B cell (primary cell): ENCODE measurements at regions of chr6 and their contacts with region 1.

Region 1: GRCh38 chr6:26553635-26554446 is 15.7 kb downstream of the HMGN4 start:
- DNase-seq: peak; percentile 92
- ATAC-seq: peak; percentile 42
- H3K4me3 ChIP-seq: peak overlapping the region; percentile 59 to 90 (median 74)
- H3K4me3 Mint-ChIP-seq: no peak overlapping the region
- H3K27ac ChIP-seq: peak overlapping the region; percentile 26 to 62
- H3K27ac Mint-ChIP-seq: no peak overlapping the region
- H3K4me1 ChIP-seq: peaks cover 15 to 45% of the 10 kb centered on the region in 2 donors
- H3K4me1 Mint-ChIP-seq: peaks cover 22% of the 10 kb centered on the region
- H3K27me3 ChIP-seq: no peaks in the 10 kb centered on the region
- H3K27me3 Mint-ChIP-seq: no peaks in the 10 kb centered on the region
- CTCF ChIP-seq: no peak

Region 2: GRCh38 chr6:26175428-26176181 is 378.2 kb before region 1 on chr6:
- CTCF ChIA-PET with region 1: interaction called, 6 read pairs
- POLR2A ChIA-PET with region 1: no interaction called
- intact Hi-C with region 1: loop called (anchors 5 kb)
- DNase-seq: peak; percentile 81
- ATAC-seq: no peak
- H3K4me3 ChIP-seq: no peak overlapping the region
- H3K4me3 Mint-ChIP-seq: peak overlapping the region; percentile 21
- H3K27ac ChIP-seq: no peak overlapping the region
- H3K27ac Mint-ChIP-seq: peak overlapping the region; percentile 85
- H3K4me1 ChIP-seq: peaks cover 21 to 26% of the 10 kb centered on the region in 2 donors
- H3K4me1 Mint-ChIP-seq: peaks cover 29% of the 10 kb centered on the region
- H3K27me3 ChIP-seq: no peaks in the 10 kb centered on the region
- H3K27me3 Mint-ChIP-seq: no peaks in the 10 kb centered on the region
- CTCF ChIP-seq: peak; percentile 93

Region 3: DNA sequence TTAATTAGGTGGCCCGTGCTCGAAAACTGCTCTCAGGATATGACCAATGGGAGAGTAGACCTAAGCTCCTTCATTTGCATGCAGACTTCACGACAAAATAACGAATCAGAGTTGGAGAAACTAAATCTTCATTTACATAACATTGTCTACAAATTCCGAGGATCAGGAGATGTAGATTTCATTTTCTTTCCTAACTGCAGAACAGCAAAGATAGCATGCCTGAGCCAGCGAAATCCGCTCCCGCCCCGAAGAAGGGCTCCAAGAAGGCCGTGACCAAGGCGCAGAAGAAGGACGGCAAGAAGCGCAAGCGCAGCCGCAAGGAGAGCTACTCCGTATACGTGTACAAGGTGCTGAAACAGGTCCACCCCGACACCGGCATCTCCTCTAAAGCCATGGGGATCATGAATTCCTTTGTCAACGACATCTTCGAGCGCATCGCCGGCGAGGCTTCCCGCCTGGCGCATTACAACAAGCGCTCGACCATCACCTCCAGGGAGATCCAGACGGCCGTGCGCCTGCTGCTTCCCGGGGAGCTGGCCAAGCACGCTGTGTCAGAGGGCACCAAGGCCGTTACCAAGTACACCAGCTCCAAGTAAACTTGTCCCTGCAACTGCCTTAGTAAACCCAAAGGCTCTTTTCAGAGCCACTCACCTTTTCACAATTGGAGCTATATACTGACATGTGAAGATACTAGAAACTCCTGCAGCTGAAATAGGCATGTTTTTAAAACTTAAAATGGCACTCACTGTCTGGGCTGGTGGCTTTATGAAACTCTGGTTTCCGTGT is 370.1 kb before region 1 on chr6:
- CTCF ChIA-PET with region 1: no interaction called
- POLR2A ChIA-PET with region 1: interaction called, 10 read pairs
- intact Hi-C with region 1: no loop called
- DNase-seq: peak; percentile 84
- ATAC-seq: peak; percentile 89
- H3K4me3 ChIP-seq: peak overlapping the region; percentile 51 to 73 (median 71)
- H3K4me3 Mint-ChIP-seq: peak overlapping the region; percentile 91
- H3K27ac ChIP-seq: peak overlapping the region in 1 of 2 donors; percentile 61
- H3K27ac Mint-ChIP-seq: peak overlapping the region; percentile 85
- H3K4me1 ChIP-seq: peaks cover 13 to 22% of the 10 kb centered on the region in 2 donors
- H3K4me1 Mint-ChIP-seq: peaks cover 25% of the 10 kb centered on the region
- H3K27me3 ChIP-seq: no peaks in the 10 kb centered on the region
- H3K27me3 Mint-ChIP-seq: no peaks in the 10 kb centered on the region
- CTCF ChIP-seq: no peak

Region 4: GRCh38 chr6:26312501-26313390 is 241.1 kb before region 1 on chr6:
- CTCF ChIA-PET with region 1: no interaction called
- POLR2A ChIA-PET with region 1: no interaction called
- intact Hi-C with region 1: loop called (anchors 2 kb)
- DNase-seq: peak; percentile 90
- ATAC-seq: peak; percentile 75
- H3K4me3 ChIP-seq: peak overlapping the region; percentile 64 to 100 (median 77)
- H3K4me3 Mint-ChIP-seq: peak overlapping the region; percentile 93
- H3K27ac ChIP-seq: peak overlapping the region in 1 of 2 donors; percentile 56
- H3K27ac Mint-ChIP-seq: peak overlapping the region; percentile 92
- H3K4me1 ChIP-seq: peaks cover 15 to 23% of the 10 kb centered on the region in 2 donors
- H3K4me1 Mint-ChIP-seq: peaks cover 32% of the 10 kb centered on the region
- H3K27me3 ChIP-seq: no peaks in the 10 kb centered on the region
- H3K27me3 Mint-ChIP-seq: peaks cover 4% of the 10 kb centered on the region
- CTCF ChIP-seq: no peak

Region 5: GRCh38 chr6:26383624-26384417 is 170.0 kb before region 1 on chr6:
- CTCF ChIA-PET with region 1: no interaction called
- POLR2A ChIA-PET with region 1: no interaction called
- intact Hi-C with region 1: no loop called
- DNase-seq: peak; percentile 54
- ATAC-seq: no peak
- H3K4me3 ChIP-seq: peak overlapping the region; percentile 70 to 97 (median 89)
- H3K4me3 Mint-ChIP-seq: peak overlapping the region; percentile 97
- H3K27ac ChIP-seq: peak overlapping the region; percentile 90 to 98
- H3K27ac Mint-ChIP-seq: peak overlapping the region; percentile 96
- H3K4me1 ChIP-seq: peaks cover 35 to 49% of the 10 kb centered on the region in 2 donors
- H3K4me1 Mint-ChIP-seq: peaks cover 66% of the 10 kb centered on the region
- H3K27me3 ChIP-seq: no peaks in the 10 kb centered on the region
- H3K27me3 Mint-ChIP-seq: no peaks in the 10 kb centered on the region
- CTCF ChIP-seq: no peak

Region 6: GRCh38 chr6:26520853-26521599 is 32.8 kb before region 1 on chr6:
- CTCF ChIA-PET with region 1: interaction called, 3 read pairs
- POLR2A ChIA-PET with region 1: interaction called, 4 read pairs
- intact Hi-C with region 1: loop called (anchors 1 kb)
- DNase-seq: peak; percentile 94
- ATAC-seq: peak; percentile 64
- H3K4me3 ChIP-seq: peak overlapping the region; percentile 60 to 95 (median 74)
- H3K4me3 Mint-ChIP-seq: peak overlapping the region; percentile 84
- H3K27ac ChIP-seq: peak overlapping the region; percentile 85 to 94
- H3K27ac Mint-ChIP-seq: peak overlapping the region; percentile 91
- H3K4me1 ChIP-seq: peaks cover 17 to 20% of the 10 kb centered on the region in 2 donors
- H3K4me1 Mint-ChIP-seq: peaks cover 33% of the 10 kb centered on the region
- H3K27me3 ChIP-seq: no peaks in the 10 kb centered on the region
- H3K27me3 Mint-ChIP-seq: no peaks in the 10 kb centered on the region
- CTCF ChIP-seq: no peak

Region 7: DNA sequence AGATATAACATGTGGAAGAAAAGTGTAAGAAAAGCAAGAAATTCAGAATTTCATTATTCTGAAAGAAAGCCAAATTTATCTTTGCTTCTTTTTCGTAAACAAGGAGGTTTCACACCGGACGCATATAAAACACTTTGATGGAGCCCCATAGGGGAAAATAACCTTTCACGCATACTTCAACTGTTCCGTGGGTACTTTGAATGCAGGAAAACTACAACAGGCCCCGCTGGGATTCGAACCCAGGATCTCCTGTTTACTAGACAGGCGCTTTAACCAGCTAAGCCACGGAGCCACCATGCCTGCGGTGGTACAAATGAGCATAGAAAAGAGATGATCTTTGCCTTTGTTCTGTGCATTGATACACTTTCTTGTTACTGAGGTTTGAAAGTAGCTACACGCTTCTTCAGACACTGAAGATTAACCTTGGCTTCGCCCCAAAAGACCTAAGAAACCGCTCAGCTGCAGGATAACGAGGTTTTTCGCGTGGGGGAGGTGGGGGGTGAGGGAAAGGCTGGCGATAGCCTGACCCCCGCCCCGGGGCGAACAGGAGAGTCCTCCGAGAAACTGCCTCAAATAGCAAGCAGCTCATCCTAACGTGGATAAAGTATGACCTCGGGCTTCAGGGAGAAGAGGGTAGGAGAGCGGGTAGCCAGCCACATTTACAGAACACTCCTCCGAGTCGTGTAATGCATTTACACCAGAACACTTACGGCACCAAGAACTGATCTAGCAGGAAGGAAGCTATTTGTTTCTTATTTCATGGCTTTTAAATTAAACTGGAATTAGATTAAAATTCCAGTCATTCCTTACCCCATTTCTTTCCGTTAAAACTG is 20.9 kb before region 1 on chr6:
- CTCF ChIA-PET with region 1: interaction called, 17 read pairs
- POLR2A ChIA-PET with region 1: interaction called, 10 read pairs
- intact Hi-C with region 1: loop called (anchors 1 kb)
- DNase-seq: peak; percentile 95
- ATAC-seq: peak; percentile 26
- H3K4me3 ChIP-seq: peak overlapping the region; percentile 56 to 86 (median 78)
- H3K4me3 Mint-ChIP-seq: peak overlapping the region; percentile 99
- H3K27ac ChIP-seq: peak overlapping the region; percentile 45 to 78
- H3K27ac Mint-ChIP-seq: peak overlapping the region; percentile 97
- H3K4me1 ChIP-seq: peaks cover 23 to 27% of the 10 kb centered on the region in 2 donors
- H3K4me1 Mint-ChIP-seq: peaks cover 48% of the 10 kb centered on the region
- H3K27me3 ChIP-seq: no peaks in the 10 kb centered on the region
- H3K27me3 Mint-ChIP-seq: peaks cover 3% of the 10 kb centered on the region
- CTCF ChIP-seq: no peak

Region 8: GRCh38 chr6:27472617-27473400 is 919.0 kb after region 1 on chr6 and contains the start of gene ZNF184:
- CTCF ChIA-PET with region 1: no interaction called
- POLR2A ChIA-PET with region 1: no interaction called
- intact Hi-C with region 1: loop called (anchors 10 kb)
- DNase-seq: peak; percentile 96
- ATAC-seq: peak; percentile 92
- H3K4me3 ChIP-seq: peak within 1 kb of the TSS; percentile 75 to 93 (median 83)
- H3K4me3 Mint-ChIP-seq: peak within 1 kb of the TSS; percentile 100
- H3K27ac ChIP-seq: peak within 1 kb of the TSS; percentile 89 to 97
- H3K27ac Mint-ChIP-seq: peak within 1 kb of the TSS; percentile 99
- H3K4me1 ChIP-seq: peaks cover 16 to 22% of the 10 kb centered on the region in 2 donors
- H3K4me1 Mint-ChIP-seq: peaks cover 44% of the 10 kb centered on the region
- H3K27me3 ChIP-seq: no peaks in the 10 kb centered on the region
- H3K27me3 Mint-ChIP-seq: no peaks in the 10 kb centered on the region
- CTCF ChIP-seq: peak; percentile 31
- total RNA-seq, gene ZNF184: 11.8 TPM in 2 replicates